Activated naive CD4-positive, alpha-beta T cell treated with anti-CD3 and anti-CD28 coated beads, Interleukin-2, amount 10 ng/mL, durations not matched to agents 7 days and 5 days (primary cell): ENCODE measurements at regions of chr20 and their contacts with region 1.

Region 1: DNA sequence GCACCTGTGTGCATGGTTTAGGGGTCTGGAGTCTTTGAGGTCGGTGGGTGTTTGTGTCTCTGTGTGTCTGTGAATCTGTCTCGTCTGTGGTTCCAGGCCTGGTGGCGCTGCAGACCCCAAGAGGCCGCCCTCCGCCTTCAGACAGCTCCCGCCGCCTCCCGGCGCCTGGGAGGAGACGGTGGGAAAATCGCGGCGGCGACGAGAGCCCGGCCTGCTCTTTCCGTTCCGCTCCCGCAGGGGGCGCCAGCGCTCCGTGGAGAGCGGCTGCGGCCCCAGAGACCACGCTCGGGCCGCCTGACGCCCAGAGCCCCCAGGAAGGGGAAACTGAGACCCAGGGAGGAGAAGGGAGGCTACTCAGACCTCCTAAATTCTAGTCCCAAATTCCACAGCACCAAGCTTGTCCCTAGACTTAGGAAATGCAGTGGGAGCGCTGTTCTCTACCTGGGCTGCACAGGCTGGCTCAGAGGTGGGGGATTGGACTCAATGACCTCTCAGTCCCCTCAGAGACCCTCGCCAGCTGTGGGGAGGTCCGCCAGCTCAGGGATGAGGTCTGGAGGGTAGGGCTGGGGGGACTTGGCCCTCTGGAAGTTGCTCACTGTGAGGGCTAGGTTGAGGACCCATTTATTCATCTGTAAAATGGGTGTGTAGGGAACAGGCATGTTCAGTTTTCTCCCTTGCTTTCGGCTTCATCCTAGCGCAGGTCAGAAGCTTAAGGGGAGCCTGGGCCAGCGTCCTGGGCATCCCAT is 36.9 kb upstream of the BLCAP start:
- DNase-seq: peak; percentile 54
- H3K4me3 Mint-ChIP-seq: no peak overlapping the region
- H3K27ac Mint-ChIP-seq: no peak overlapping the region
- H3K4me1 Mint-ChIP-seq: no peaks in the 10 kb centered on the region
- H3K27me3 Mint-ChIP-seq: peaks cover 61% of the 10 kb centered on the region

Region 2: DNA sequence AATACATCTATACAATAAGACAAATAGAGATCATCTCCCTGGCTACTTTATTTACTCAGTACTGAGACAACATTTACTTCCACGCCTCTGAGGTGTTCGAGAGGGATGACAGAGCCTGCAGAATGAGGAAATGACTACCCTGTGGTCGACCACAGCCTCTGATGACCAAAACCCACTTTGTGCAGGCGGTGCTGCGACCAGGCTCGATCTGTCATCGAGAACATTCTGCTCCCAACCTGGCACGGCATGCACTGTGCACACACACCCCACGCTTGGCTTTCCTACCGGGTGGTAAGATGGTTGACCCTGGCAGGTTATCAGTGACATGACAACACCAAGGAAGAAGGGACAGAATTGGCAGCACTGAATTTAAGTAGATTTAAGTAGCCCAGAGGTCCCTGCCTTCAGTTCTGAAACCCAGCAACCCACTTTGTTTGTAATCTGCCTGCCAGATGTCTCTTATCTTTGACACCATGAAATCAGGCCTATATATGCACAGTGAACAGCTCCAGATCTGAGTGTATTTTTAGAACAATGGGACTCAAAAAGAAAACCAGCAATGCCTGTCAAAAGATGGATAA is 426.1 kb after region 1 on chr20:
- CTCF ChIA-PET with region 1: interaction called, 30 read pairs
- DNase-seq: peak; percentile 65
- H3K4me3 Mint-ChIP-seq: no peak overlapping the region
- H3K27ac Mint-ChIP-seq: peak overlapping the region; percentile 84
- H3K4me1 Mint-ChIP-seq: peaks cover 23% of the 10 kb centered on the region
- H3K27me3 Mint-ChIP-seq: no peaks in the 10 kb centered on the region